ENCODE measurements at regions of chr14 and their contacts with region 1.

Region 1: DNA sequence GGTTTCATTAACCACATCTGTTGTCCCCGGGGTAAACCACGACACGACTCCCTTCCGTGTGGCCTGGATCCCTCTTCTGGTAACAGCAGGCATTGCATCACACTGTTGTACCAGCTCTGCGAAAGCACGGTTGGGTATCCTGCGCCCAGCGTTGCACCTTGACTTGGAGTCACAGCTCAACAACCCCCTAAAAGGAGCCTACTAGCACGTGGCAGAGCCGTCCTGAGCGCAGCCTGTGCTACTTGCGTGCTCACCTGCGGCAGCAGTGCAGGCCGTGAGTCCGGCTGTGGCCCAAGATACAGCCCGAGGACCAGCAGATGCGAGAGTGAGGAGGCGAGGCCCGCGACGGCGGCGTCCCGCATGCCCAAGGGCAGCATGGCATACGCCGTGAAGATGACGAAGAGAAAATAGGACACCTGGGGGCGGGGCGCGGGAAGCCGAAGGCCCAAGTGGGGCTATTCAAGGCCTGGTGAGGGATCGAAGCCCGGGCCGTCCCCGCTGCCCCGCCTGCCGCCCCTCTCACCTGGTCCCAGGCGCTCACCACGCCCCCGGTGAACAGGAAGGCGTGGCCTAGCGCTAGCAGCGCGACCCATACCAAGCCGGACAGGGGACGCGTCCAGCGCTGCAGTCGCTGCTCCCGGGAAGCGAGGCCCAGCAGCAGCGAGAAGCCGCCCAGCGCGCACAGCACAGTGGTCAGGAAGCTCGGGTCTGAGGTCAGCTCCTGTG is 2.4 kb downstream of the ADCY4 start:
- DNase-seq: peak; percentile 94
- ATAC-seq: peak; percentile 79
- H3K4me3 Mint-ChIP-seq: peak overlapping the region; percentile 75
- H3K27ac Mint-ChIP-seq: peak overlapping the region; percentile 61
- H3K4me1 Mint-ChIP-seq: peaks cover 73% of the 10 kb centered on the region
- H3K27me3 Mint-ChIP-seq: peaks cover 22% of the 10 kb centered on the region

Region 2: GRCh38 chr14:24241829-24242443 is 90.5 kb before region 1 on chr14:
- CTCF ChIA-PET with region 1: interaction called, 38 read pairs
- POLR2A ChIA-PET with region 1: interaction called, 4 read pairs
- DNase-seq: peak; percentile 95
- ATAC-seq: peak; percentile 85
- H3K4me3 Mint-ChIP-seq: peak overlapping the region; percentile 94
- H3K27ac Mint-ChIP-seq: peak overlapping the region; percentile 100
- H3K4me1 Mint-ChIP-seq: peaks cover 54% of the 10 kb centered on the region
- H3K27me3 Mint-ChIP-seq: no peaks in the 10 kb centered on the region

Region 3: GRCh38 chr14:24299255-24300195 is 32.9 kb before region 1 on chr14 and contains the starts of genes DHRS1 and NOP9:
- CTCF ChIA-PET with region 1: interaction called, 21 read pairs
- POLR2A ChIA-PET with region 1: interaction called, 4 read pairs
- DNase-seq: peak; percentile 94
- ATAC-seq: peak; percentile 83
- H3K4me3 Mint-ChIP-seq: peak within 1 kb of the TSS; percentile 91
- H3K27ac Mint-ChIP-seq: peak within 1 kb of the TSS; percentile 91
- H3K4me1 Mint-ChIP-seq: peaks cover 53% of the 10 kb centered on the region
- H3K27me3 Mint-ChIP-seq: no peaks in the 10 kb centered on the region
- total RNA-seq, gene DHRS1: 28.6 to 33.9 TPM
- total RNA-seq, gene NOP9: 35.2 to 36.7 TPM

Region 4: DNA sequence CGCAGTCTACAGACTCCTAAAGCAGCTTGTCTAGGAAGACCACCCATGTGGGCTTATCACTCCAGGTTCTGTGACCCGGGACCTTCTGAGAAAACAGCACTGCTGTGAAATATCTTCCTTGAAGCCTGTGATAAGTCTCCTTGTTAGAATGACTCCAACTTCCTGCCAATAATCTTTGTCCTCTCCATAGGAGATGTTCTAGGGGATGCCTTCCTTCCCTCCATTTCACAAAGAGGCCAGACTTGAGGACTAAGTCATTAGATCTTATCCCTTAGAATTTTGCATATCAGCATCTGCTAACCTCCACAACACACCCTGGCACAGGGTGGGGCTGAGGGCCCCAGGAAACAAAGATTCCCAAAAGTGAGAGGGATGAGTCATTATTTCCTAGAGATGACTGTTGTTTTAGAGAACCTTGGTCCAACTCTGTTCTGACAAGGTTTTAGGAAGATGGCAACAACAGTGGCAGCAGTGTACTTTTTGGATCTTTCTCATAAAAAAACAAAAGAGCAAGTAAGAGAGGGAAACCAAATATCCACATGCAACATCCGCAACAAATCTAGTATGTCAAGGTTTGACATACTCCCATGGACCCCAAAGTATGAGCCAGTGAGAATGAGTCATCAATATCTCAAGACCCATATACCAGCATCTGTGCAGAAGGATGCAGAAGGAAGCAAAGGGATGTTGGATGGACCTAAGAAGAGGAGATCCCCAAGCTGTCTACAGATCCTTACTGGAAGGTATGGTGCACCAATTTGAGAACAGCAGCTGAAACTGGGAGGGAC is 15.1 kb before region 1 on chr14:
- CTCF ChIA-PET with region 1: interaction called, 142 read pairs
- POLR2A ChIA-PET with region 1: interaction called, 5 read pairs
- DNase-seq: no peak
- ATAC-seq: no peak
- H3K4me3 Mint-ChIP-seq: no peak overlapping the region
- H3K27ac Mint-ChIP-seq: no peak overlapping the region
- H3K4me1 Mint-ChIP-seq: peaks cover 49% of the 10 kb centered on the region
- H3K27me3 Mint-ChIP-seq: peaks cover 16% of the 10 kb centered on the region

Region 5: GRCh38 chr14:24372701-24373416 is 40.4 kb after region 1 on chr14:
- CTCF ChIA-PET with region 1: interaction called, 12 read pairs
- POLR2A ChIA-PET with region 1: no interaction called
- DNase-seq: no peak
- ATAC-seq: no peak
- H3K4me3 Mint-ChIP-seq: no peak overlapping the region
- H3K27ac Mint-ChIP-seq: no peak overlapping the region
- H3K4me1 Mint-ChIP-seq: peaks cover 14% of the 10 kb centered on the region
- H3K27me3 Mint-ChIP-seq: peaks cover 21% of the 10 kb centered on the region

Region 6: DNA sequence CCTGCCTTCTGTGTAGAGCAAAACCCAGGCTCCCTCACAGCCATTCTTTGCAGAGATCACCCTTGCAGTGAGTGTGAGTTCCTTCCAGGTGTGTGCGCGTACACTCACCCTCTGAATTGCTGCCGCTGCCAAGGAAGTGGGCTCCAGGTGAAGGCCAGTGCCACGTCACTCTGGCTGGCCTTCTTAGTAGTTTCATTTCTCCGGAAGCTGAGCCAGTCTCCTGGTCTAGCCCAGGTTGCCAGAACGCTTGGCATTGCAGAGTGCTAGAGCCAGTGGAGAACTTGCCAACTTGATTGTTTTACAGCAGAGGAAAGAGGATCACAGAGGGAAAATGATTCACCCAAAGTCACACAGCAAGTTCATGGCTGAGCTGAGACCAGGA is 86.1 kb after region 1 on chr14:
- CTCF ChIA-PET with region 1: interaction called, 709 read pairs
- POLR2A ChIA-PET with region 1: interaction called, 3 read pairs
- DNase-seq: no peak
- ATAC-seq: no peak
- H3K4me3 Mint-ChIP-seq: no peak overlapping the region
- H3K27ac Mint-ChIP-seq: no peak overlapping the region
- H3K4me1 Mint-ChIP-seq: no peaks in the 10 kb centered on the region
- H3K27me3 Mint-ChIP-seq: peaks cover 8% of the 10 kb centered on the region